IMR-90 (cell line): ENCODE measurements at regions of chr5 and their contacts with region 1.

Region 1: DNA sequence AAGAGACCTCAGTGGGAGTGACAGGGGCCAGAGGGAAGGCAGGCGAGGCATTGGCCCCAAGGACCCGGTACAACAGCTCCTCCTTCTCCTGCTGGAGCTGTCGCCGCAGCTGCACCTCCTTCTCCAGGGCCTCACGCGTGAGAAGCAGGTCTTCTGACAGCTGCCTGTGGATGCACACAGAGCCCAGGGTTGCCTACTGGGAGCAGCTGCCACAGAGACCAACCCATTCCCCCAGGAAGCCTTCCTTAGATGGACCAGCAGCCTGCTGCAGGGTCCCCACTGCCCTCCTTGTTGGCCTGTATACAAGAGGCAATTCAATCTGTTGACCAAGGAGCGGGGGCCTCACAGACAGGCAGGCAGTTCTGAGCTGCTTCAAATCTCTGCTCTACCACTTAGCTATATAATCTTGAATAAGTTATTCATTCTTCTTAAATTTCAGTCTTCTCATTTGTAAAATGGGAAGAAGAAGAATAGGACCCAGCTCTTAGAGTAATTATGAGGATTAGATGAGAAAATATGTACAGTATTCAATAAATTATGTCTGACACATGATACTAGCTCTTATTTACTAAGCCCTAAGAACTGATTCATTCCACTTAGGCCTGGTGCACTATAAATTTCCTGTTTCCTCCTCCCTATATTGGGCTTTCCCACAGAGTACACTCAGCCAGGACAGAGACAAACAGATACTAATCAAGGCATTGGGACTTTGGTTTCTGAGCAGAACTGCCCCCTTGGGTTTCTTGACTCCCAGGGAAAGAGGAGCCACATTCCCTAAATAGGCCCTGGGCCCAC is 26.1 kb upstream of the ANXA6 start:
- DNase-seq: peak; percentile 19
- ATAC-seq: peak; percentile 85
- H3K4me3 ChIP-seq: no peak overlapping the region
- H3K27ac ChIP-seq: no peak overlapping the region
- H3K4me1 ChIP-seq: peaks cover 2% of the 10 kb centered on the region; the same call in 1 of the 2 replicates
- H3K27me3 ChIP-seq: peaks cover 8% of the 10 kb centered on the region
- CTCF ChIP-seq: no peak
- POLR2A ChIP-seq: no peak
- RAD21 ChIP-seq: no peak

Region 2: GRCh38 chr5:151223469-151224264 is 40.0 kb after region 1 on chr5 and contains the start of gene CCDC69:
- CTCF ChIA-PET with region 1: no interaction called
- POLR2A ChIA-PET with region 1: no interaction called
- dilution Hi-C with region 1: no loop called
- in situ Hi-C with region 1: no loop called
- intact Hi-C with region 1: loop called (anchors 5 kb)
- DNase-seq: peak; percentile 57
- ATAC-seq: peak; percentile 93
- H3K4me3 ChIP-seq: peak within 1 kb of the TSS; percentile 55
- H3K27ac ChIP-seq: no peak within 1 kb of the TSS
- H3K4me1 ChIP-seq: peaks cover 5% of the 10 kb centered on the region
- H3K27me3 ChIP-seq: peaks cover 6% of the 10 kb centered on the region
- CTCF ChIP-seq: no peak; the same call in 1 of the 2 replicates
- POLR2A ChIP-seq: no peak
- RAD21 ChIP-seq: no peak
- total RNA-seq, gene CCDC69: 0.36 and 0.56 TPM in 2 replicates